ENCODE measurements at regions of chr16 and their contacts with region 1.

Region 1: DNA sequence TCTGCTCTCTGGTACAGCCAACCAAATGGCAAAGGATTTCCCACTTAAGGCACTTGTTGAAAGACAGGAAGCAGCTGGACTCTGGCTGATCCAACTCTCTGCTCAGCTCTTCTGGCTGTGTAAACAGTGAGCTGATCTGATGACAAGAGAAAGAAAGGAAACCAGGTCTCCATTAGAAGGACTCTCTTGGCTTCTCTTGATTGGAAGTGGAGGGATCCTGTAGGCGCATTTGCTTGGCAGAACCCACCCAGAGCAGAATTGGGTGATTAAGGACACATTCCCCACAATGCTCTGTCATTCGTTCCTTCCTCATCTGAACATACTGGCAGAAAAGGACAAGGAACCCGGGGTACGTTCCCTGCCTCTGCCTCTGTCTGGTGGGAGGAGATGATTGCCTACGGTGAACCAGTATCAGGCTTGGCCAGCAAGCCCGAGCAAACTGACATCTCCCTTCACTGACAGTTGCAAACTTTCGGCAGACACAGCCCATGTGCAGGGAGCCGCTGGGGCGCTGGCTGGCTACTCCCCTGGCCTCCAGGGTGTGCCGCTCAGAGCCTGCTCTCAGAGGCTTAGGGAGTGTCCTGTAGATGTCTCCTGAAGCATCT is 29.1 kb downstream of the LDHD start:
- DNase-seq: no peak
- H3K4me3 Mint-ChIP-seq: no peak overlapping the region
- H3K27ac Mint-ChIP-seq: no peak overlapping the region
- H3K4me1 Mint-ChIP-seq: peaks cover 24% of the 10 kb centered on the region
- H3K27me3 Mint-ChIP-seq: no peaks in the 10 kb centered on the region

Region 2: GRCh38 chr16:74973153-74973703 is 114.2 kb before region 1 on chr16:
- CTCF ChIA-PET with region 1: no interaction called
- POLR2A ChIA-PET with region 1: no interaction called
- DNase-seq: no peak
- H3K4me3 Mint-ChIP-seq: no peak overlapping the region
- H3K27ac Mint-ChIP-seq: no peak overlapping the region
- H3K4me1 Mint-ChIP-seq: peaks cover 2% of the 10 kb centered on the region
- H3K27me3 Mint-ChIP-seq: no peaks in the 10 kb centered on the region

Region 3: DNA sequence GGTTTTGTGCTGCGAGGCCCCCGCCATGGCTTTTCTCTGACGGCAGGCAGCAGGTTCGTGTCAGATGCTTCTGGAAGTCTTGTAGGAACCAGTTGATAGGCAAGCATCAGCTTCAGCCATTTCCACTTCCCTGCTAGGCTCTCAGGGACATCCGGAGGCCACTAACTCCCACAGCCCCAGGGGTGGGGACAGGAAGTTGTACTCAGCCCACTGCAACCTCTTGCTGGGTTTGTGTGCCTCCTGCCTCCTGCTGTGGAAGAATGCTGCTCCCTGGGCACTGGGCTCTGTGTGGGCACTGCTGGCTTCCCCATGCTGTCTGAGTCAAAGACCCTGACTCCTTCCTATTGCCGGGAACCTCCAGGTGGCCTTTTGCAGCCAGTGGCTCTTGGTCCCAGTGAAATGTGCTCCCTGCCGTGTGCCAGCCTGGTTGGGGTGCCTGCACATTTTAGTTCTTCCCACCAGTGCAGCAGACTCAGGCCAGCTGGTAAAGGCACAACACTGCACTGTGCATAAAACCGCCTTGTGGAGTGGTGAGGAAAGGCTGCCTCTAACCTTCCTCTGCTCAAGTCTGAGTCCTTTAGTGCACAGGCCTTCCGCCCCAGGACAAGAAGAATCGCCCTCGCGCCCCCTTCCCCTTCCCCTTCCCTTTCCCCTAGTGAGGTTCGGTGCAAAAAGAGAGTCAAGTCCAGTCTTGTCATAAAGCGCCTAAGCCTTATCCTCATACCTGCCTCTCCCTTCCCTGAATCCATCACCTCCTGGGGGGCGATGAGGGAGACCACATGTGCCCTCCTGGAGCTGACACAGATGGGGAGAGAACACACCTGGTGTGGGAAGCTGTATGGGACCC is 12.5 kb after region 1 on chr16:
- CTCF ChIA-PET with region 1: interaction called, 10 read pairs
- POLR2A ChIA-PET with region 1: no interaction called
- DNase-seq: peak; percentile 57
- H3K4me3 Mint-ChIP-seq: peak overlapping the region; percentile 32
- H3K27ac Mint-ChIP-seq: peak overlapping the region; percentile 90
- H3K4me1 Mint-ChIP-seq: peaks cover 56% of the 10 kb centered on the region
- H3K27me3 Mint-ChIP-seq: no peaks in the 10 kb centered on the region

Region 4: GRCh38 chr16:75206749-75207451 is 119.4 kb after region 1 on chr16 and contains the start of gene CTRB2:
- CTCF ChIA-PET with region 1: no interaction called
- POLR2A ChIA-PET with region 1: no interaction called
- DNase-seq: no peak
- H3K4me3 Mint-ChIP-seq: no peak within 1 kb of the TSS
- H3K27ac Mint-ChIP-seq: no peak within 1 kb of the TSS
- H3K4me1 Mint-ChIP-seq: no peaks in the 10 kb centered on the region
- H3K27me3 Mint-ChIP-seq: no peaks in the 10 kb centered on the region
- total RNA-seq, gene CTRB2: not detected

Measured in activated CD4-positive, alpha-beta T cell treated with anti-CD3 and anti-CD28 coated beads, Interleukin-2, amount 10 ng/mL, durations not matched to agents 7 days and 5 days (primary cell).